Activated CD4-positive, alpha-beta T cell treated with anti-CD3 and anti-CD28 coated beads, Interleukin-2, amount 10 ng/mL, durations not matched to agents 7 days and 5 days (primary cell): ENCODE measurements at regions of chr1 and their contacts with region 1.

Region 1: GRCh38 chr1:47192458-47193384 is 2.9 kb upstream of the PDZK1IP1 start:
- DNase-seq: peak; percentile 73
- H3K4me3 Mint-ChIP-seq: no peak overlapping the region
- H3K27ac Mint-ChIP-seq: no peak overlapping the region
- H3K4me1 Mint-ChIP-seq: peaks cover 1% of the 10 kb centered on the region
- H3K27me3 Mint-ChIP-seq: peaks cover 7% of the 10 kb centered on the region

Region 2: GRCh38 chr1:47147047-47147785 is 45.5 kb before region 1 on chr1:
- CTCF ChIA-PET with region 1: no interaction called
- POLR2A ChIA-PET with region 1: no interaction called
- DNase-seq: no peak
- H3K4me3 Mint-ChIP-seq: no peak overlapping the region
- H3K27ac Mint-ChIP-seq: no peak overlapping the region
- H3K4me1 Mint-ChIP-seq: no peaks in the 10 kb centered on the region
- H3K27me3 Mint-ChIP-seq: peaks cover 6% of the 10 kb centered on the region

Region 3: GRCh38 chr1:47164552-47164951 is 28.2 kb before region 1 on chr1:
- CTCF ChIA-PET with region 1: no interaction called
- POLR2A ChIA-PET with region 1: no interaction called
- DNase-seq: no peak
- H3K4me3 Mint-ChIP-seq: no peak overlapping the region
- H3K27ac Mint-ChIP-seq: no peak overlapping the region
- H3K4me1 Mint-ChIP-seq: no peaks in the 10 kb centered on the region
- H3K27me3 Mint-ChIP-seq: peaks cover 34% of the 10 kb centered on the region

Region 4: GRCh38 chr1:47179017-47179987 is 13.4 kb before region 1 on chr1:
- CTCF ChIA-PET with region 1: interaction called, 23 read pairs
- POLR2A ChIA-PET with region 1: no interaction called
- DNase-seq: peak; percentile 82
- H3K4me3 Mint-ChIP-seq: peak overlapping the region; percentile 71
- H3K27ac Mint-ChIP-seq: peak overlapping the region; percentile 87
- H3K4me1 Mint-ChIP-seq: peaks cover 8% of the 10 kb centered on the region
- H3K27me3 Mint-ChIP-seq: peaks cover 26% of the 10 kb centered on the region

Region 5: DNA sequence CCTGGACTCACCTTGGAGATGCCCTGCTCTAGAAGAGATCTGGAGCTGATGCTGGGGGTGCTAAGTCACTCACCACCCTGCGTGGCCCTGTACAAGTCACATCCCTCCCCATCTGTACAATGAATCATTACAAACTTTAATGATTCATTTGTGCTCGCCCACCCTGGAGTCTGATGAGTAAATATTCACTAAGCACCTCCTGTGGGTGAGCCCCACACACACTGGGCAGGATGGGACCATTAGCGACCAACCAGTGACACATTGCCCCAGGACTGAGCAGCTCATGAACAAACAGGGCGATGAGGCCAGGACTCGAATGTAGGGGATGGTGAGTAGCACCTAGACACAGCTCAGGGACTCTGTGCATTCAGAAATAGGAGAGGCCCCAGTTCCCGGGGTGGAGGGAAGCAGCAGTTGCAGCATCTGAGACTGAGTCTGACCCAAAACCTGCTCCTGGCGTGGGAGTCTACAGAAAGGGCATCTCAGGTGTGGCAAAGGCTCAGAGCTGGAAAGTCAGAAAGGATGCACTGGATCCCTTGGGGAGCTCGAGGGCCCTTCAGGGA is 15.2 kb after region 1 on chr1:
- CTCF ChIA-PET with region 1: interaction called, 22 read pairs
- POLR2A ChIA-PET with region 1: no interaction called
- DNase-seq: no peak
- H3K4me3 Mint-ChIP-seq: no peak overlapping the region
- H3K27ac Mint-ChIP-seq: no peak overlapping the region
- H3K4me1 Mint-ChIP-seq: peaks cover 3% of the 10 kb centered on the region
- H3K27me3 Mint-ChIP-seq: peaks cover 24% of the 10 kb centered on the region

Region 6: GRCh38 chr1:47378147-47378546 is 185.4 kb after region 1 on chr1:
- CTCF ChIA-PET with region 1: no interaction called
- POLR2A ChIA-PET with region 1: no interaction called
- DNase-seq: no peak
- H3K4me3 Mint-ChIP-seq: no peak overlapping the region
- H3K27ac Mint-ChIP-seq: no peak overlapping the region
- H3K4me1 Mint-ChIP-seq: no peaks in the 10 kb centered on the region
- H3K27me3 Mint-ChIP-seq: no peaks in the 10 kb centered on the region